Activated B cell treated with CpG ODN at 0.5 μM for 24 hours (primary cell): ENCODE measurements at regions of chr1 and their contacts with region 1.

Region 1: GRCh38 chr1:230661976-230662375 is 19.7 kb downstream of the COG2 start:
- DNase-seq: no peak
- ATAC-seq: no peak
- H3K4me3 Mint-ChIP-seq: no peak overlapping the region
- H3K27ac Mint-ChIP-seq: no peak overlapping the region
- H3K4me1 Mint-ChIP-seq: no peaks in the 10 kb centered on the region
- H3K27me3 Mint-ChIP-seq: no peaks in the 10 kb centered on the region
- CTCF ChIP-seq: no peak

Region 2: GRCh38 chr1:230215031-230215430 is 446.9 kb before region 1 on chr1:
- CTCF ChIA-PET with region 1: no interaction called
- POLR2A ChIA-PET with region 1: no interaction called
- intact Hi-C with region 1: no loop called
- DNase-seq: no peak
- ATAC-seq: no peak
- H3K4me3 Mint-ChIP-seq: no peak overlapping the region
- H3K27ac Mint-ChIP-seq: peak overlapping the region; percentile 84
- H3K4me1 Mint-ChIP-seq: peaks cover 87% of the 10 kb centered on the region
- H3K27me3 Mint-ChIP-seq: no peaks in the 10 kb centered on the region
- CTCF ChIP-seq: no peak

Region 3: DNA sequence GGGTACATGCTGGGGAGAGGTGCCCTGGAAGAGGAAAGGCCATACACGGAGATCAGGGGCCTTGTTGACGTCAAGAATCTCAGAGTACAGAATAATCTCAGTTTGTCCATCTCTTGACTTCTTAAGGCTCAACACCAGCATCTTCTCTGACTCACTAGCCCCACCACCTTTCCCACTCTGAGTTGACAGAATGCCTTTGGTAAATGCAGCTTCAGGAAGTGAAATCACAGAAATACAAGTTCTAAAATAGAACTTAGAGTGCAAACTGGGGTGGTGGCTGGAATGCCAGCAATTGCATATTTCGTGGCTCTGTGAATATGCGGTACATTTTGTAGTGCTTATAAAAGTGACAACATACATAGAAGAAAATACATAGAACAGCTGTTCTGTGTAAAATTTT is 18.1 kb before region 1 on chr1:
- CTCF ChIA-PET with region 1: no interaction called
- POLR2A ChIA-PET with region 1: no interaction called
- intact Hi-C with region 1: no loop called
- DNase-seq: no peak
- ATAC-seq: no peak
- H3K4me3 Mint-ChIP-seq: peak overlapping the region; percentile 98
- H3K27ac Mint-ChIP-seq: no peak overlapping the region
- H3K4me1 Mint-ChIP-seq: peaks cover 54% of the 10 kb centered on the region
- H3K27me3 Mint-ChIP-seq: peaks cover 7% of the 10 kb centered on the region
- CTCF ChIP-seq: no peak

Region 4: GRCh38 chr1:230681599-230681998 is 19.6 kb after region 1 on chr1:
- CTCF ChIA-PET with region 1: no interaction called
- POLR2A ChIA-PET with region 1: no interaction called
- intact Hi-C with region 1: loop called (anchors 1 kb)
- DNase-seq: no peak
- ATAC-seq: no peak
- H3K4me3 Mint-ChIP-seq: no peak overlapping the region
- H3K27ac Mint-ChIP-seq: no peak overlapping the region
- H3K4me1 Mint-ChIP-seq: no peaks in the 10 kb centered on the region
- H3K27me3 Mint-ChIP-seq: no peaks in the 10 kb centered on the region
- CTCF ChIP-seq: no peak